PC-3 (cell line): ENCODE measurements at regions of chr13 and their contacts with region 1.

Region 1: GRCh38 chr13:72808917-72809500 is 27.1 kb downstream of the PIBF1 start:
- DNase-seq: peak; percentile 41
- ATAC-seq: no peak
- H3K4me3 ChIP-seq: no peak overlapping the region
- H3K27ac ChIP-seq: peak overlapping the region; percentile 33; the same call in 1 of the 2 replicates
- H3K4me1 ChIP-seq: no peaks in the 10 kb centered on the region
- H3K27me3 ChIP-seq: no peaks in the 10 kb centered on the region
- CTCF ChIP-seq: peak; percentile 59

Region 2: DNA sequence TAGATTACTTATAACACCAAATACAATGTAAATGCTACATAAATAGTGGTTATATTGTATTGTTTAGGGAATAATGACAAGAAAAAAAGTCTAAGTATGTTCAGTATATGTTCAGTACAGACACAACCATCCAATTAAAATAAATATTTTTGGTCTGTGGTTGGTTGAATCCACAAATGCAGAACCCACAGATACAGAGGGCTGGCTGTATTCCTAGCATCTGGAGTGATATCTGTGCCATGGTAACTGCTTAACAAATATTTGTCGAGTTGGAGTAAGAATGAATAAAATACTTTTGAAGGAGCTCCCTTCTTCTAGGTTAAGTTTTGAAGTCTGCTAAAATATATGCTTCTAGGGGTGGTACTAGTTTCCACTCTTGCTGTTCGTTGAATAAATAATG is 490.8 kb after region 1 on chr13:
- CTCF ChIA-PET with region 1: no interaction called
- POLR2A ChIA-PET with region 1: interaction called, 17 read pairs
- intact Hi-C with region 1: no loop called
- DNase-seq: no peak
- ATAC-seq: no peak
- H3K4me3 ChIP-seq: no peak overlapping the region
- H3K27ac ChIP-seq: no peak overlapping the region
- H3K4me1 ChIP-seq: peaks cover 17% of the 10 kb centered on the region
- H3K27me3 ChIP-seq: no peaks in the 10 kb centered on the region
- CTCF ChIP-seq: no peak

Region 3: GRCh38 chr13:73355134-73355533 is 546.1 kb after region 1 on chr13:
- CTCF ChIA-PET with region 1: no interaction called
- POLR2A ChIA-PET with region 1: no interaction called
- intact Hi-C with region 1: no loop called
- DNase-seq: peak; percentile 45
- ATAC-seq: peak; percentile 51
- H3K4me3 ChIP-seq: no peak overlapping the region
- H3K27ac ChIP-seq: 0 out of 2 replicates have a peak overlapping the region, but pooled peaks have one; percentile 20
- H3K4me1 ChIP-seq: peaks cover 10% of the 10 kb centered on the region; the same call in 1 of the 2 replicates
- H3K27me3 ChIP-seq: no peaks in the 10 kb centered on the region
- CTCF ChIP-seq: no peak

Region 4: GRCh38 chr13:73608711-73609485 is 799.9 kb after region 1 on chr13:
- CTCF ChIA-PET with region 1: interaction called, 10 read pairs
- POLR2A ChIA-PET with region 1: no interaction called
- intact Hi-C with region 1: no loop called
- DNase-seq: no peak
- ATAC-seq: no peak
- H3K4me3 ChIP-seq: no peak overlapping the region
- H3K27ac ChIP-seq: peak overlapping the region; percentile 74
- H3K4me1 ChIP-seq: peaks cover 36% of the 10 kb centered on the region
- H3K27me3 ChIP-seq: no peaks in the 10 kb centered on the region
- CTCF ChIP-seq: no peak

Region 5: DNA sequence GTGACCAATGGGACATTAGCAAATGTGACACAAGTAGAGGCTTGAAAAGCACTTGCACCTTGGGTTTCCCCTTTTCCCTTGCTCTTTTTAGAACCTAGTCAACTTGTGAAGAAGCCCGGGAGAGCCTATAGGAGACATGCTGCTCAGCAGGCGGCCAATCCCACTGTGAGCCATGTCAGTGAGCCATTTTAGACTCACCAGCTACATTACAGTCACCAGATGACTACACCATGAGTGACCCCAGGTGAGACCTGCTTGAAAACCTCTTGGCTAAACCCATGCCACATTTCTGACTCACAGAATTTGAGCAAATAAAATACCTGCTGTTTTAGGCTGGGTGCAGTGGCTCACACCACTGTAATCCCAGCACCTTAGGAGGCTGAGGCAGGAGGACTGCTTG is 1007.7 kb after region 1 on chr13:
- CTCF ChIA-PET with region 1: no interaction called
- POLR2A ChIA-PET with region 1: interaction called, 10 read pairs
- intact Hi-C with region 1: no loop called
- DNase-seq: peak; percentile 83
- ATAC-seq: peak; percentile 80
- H3K4me3 ChIP-seq: no peak overlapping the region
- H3K27ac ChIP-seq: peak overlapping the region; percentile 64
- H3K4me1 ChIP-seq: peaks cover 6% of the 10 kb centered on the region
- H3K27me3 ChIP-seq: no peaks in the 10 kb centered on the region
- CTCF ChIP-seq: no peak

Region 6: GRCh38 chr13:74465271-74465670 is 1656.3 kb after region 1 on chr13:
- CTCF ChIA-PET with region 1: interaction called, 13 read pairs
- POLR2A ChIA-PET with region 1: no interaction called
- intact Hi-C with region 1: no loop called
- DNase-seq: no peak
- ATAC-seq: no peak
- H3K4me3 ChIP-seq: no peak overlapping the region
- H3K27ac ChIP-seq: no peak overlapping the region
- H3K4me1 ChIP-seq: no peaks in the 10 kb centered on the region
- H3K27me3 ChIP-seq: no peaks in the 10 kb centered on the region
- CTCF ChIP-seq: no peak